ENCODE measurements at regions of chr5 and their contacts with region 1.

Region 1: DNA sequence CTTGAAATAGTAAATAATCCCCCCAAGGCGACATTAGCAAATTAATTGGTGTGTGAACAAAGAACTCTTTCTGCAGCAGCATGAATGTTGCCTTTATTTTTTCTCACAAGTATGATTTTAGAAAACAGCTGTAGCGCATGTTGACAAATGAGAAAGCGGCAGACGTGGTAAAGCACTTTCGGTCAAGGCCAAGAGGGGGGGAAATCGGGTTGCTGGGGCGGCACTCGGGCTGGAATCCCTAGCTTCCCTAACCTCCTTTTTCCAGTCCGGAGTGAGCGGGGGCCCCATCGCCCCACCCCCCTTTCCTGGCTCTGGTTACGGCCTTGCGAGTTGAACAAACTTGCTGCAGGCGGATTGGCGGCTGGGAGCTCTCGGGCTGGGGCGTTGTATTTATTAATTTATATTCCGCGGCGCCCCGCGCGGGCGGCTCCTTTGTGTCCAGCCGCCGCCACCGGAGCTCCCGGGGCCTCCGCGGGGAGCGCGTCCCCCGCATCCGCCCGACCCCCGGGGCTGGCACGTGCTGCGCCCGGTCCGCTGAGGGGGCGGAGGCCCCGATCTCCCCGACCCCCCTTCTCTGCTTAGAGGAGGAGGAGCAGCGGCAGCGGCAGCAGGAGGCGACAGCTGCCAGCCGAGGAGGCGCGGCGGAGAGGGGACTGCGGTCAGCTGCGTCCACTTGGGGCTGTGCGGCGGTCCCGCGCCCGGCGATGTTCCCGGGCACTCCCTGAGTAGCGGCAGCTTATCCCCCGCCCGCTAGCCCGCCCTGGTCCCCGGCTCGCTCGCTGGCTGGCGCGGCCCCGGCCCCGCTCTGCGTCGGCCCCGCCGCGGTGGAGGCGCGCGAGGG is at the start of gene RHOBTB3:
- DNase-seq: peak; percentile 92 to 95
- H3K4me3 ChIP-seq: peak within 1 kb of the TSS; percentile 79 to 96
- H3K27ac ChIP-seq: peak within 1 kb of the TSS; percentile 93 to 99
- H3K4me1 ChIP-seq: peaks cover 0 to 63% (median 22%) of the 10 kb centered on the region in 4 donors
- H3K27me3 ChIP-seq: no peaks in the 10 kb centered on the region
- CTCF ChIP-seq: no peak

Region 2: DNA sequence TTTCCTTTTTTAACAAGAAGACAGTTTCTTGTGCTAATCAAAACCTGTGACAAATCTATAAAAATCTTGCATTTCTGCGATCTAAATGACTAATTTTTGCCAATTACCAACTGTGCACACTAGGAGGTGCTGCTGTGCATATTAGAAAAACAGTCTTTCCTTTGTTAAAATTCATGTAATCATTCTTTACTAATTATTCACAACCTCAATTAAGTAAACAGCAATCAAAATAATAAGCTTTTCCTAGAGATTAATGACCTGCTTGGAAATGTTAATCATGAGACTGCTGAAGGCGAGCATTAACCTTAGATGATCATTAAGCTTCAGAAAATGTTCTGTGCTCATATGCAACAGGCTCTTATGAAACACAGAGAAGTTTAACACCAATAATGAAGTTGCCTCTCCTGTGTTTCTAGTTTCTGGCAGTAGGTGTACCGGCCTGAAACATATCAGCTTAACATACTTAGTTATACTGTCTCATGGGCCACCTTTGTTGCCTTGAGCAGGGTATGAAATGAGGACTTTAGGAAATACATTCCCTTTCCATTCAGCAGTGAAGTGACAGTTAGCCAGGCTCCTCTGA is 66.7 kb before region 1 on chr5:
- intact Hi-C with region 1: loop called (anchors 5 kb)
- DNase-seq: peak in 1 of 2 donors; percentile 38
- H3K4me3 ChIP-seq: no peak overlapping the region
- H3K27ac ChIP-seq: no peak overlapping the region
- H3K4me1 ChIP-seq: peaks cover 0 to 3% (median under 1%) of the 10 kb centered on the region in 4 donors
- H3K27me3 ChIP-seq: no peaks in the 10 kb centered on the region
- CTCF ChIP-seq: peak; percentile 76 to 80

Region 3: DNA sequence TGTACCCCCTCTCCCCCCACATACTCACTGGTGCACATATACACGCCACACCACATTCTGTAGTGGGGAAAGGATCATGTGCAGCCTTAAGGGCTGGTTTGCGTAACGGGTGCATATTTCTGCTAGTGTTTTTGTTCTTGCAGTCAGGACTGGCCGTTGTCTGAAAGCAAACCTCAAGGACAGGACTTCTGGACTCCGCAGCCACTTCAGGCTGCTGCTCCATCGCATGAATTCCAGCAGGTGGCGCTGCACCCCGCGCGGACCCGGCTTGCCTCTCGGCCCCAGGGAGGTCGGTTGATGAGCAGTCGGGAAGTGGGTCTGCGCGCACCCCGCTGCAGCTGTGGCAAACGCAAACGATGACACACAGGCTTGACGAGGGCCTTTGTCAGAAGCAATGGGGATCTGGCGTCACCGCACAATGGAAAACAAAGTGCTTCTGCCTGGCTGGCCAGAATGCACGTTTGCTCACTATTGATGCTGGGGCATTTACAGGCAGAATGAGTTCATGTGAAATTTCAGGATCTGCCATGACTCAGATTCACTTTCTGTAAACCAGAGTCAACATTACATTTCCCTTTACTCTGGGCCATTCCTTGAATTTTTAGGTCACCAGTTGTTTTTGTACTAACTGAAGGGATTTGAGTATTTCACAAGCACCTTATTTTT is 127.8 kb after region 1 on chr5:
- intact Hi-C with region 1: no loop called
- DNase-seq: peak; percentile 93 to 99
- H3K4me3 ChIP-seq: peak overlapping the region; percentile 15 to 25
- H3K27ac ChIP-seq: peak overlapping the region; percentile 89 to 97
- H3K4me1 ChIP-seq: peaks cover 0 to 79% (median 55%) of the 10 kb centered on the region in 4 donors
- H3K27me3 ChIP-seq: no peaks in the 10 kb centered on the region
- CTCF ChIP-seq: peak; percentile 99 to 100